Mucosa of descending colon (tissue), 3 donors: ENCODE measurements at regions of chr10 and their contacts with region 1.

Region 1: GRCh38 chr10:88932539-88933256 is 19.9 kb downstream of the ACTA2 start:
- DNase-seq: peak in 2 of 3 donors; percentile 29 to 62
- ATAC-seq: peak; percentile 84
- H3K4me3 ChIP-seq: no peak overlapping the region
- H3K4me1 ChIP-seq: peaks cover 21% of the 10 kb centered on the region
- CTCF ChIP-seq: peak; percentile 56

Region 2: GRCh38 chr10:88835096-88835909 is 97.4 kb before region 1 on chr10:
- intact Hi-C with region 1: loop called (anchors 2 to 5 kb)
- DNase-seq: peak; percentile 86 to 92 (median 91)
- ATAC-seq: peak; percentile 96
- H3K4me3 ChIP-seq: no peak overlapping the region
- H3K4me1 ChIP-seq: no peaks in the 10 kb centered on the region
- CTCF ChIP-seq: peak; percentile 68

Region 3: DNA sequence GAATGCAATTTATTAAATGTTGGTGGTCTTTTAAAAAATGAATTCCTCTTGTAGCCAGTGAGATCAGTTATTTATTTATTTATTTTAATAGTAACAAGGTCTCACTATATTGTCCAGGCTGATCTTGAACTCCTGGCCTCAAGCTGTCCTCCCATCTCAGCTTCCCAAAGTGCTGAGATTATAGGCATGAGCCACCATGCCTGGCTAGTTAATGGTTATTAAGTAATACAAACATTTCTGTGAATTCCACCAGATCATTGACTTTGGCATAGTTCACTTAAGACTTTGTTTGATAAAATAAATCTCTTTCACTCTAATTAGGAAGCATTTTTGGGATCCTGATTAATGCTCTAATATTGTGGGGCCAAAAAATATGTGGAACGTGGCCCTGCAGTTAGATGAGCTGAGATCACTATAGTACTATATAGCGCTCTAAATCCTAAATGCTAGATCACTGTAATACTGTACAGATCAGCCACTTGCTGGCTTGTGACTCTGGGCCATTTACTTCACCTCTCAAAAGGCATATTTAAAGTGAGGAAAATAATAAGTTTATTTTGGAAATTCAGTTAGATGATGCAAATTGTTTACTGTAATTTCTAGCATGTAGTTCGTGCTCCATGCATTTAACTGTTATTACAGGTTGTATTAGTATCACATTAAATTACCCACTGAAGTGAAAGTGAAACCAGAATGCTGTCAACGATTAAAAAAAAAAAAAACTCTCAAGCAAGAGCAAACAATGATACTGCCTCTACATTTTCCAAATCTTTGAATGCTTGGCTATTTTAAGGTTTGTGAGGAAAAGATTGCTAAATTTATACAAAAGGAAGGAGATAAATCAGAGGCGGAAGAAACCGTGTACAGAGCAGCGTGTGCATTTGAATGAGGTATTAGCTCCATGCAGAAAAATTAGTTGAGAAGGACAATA is 42.0 kb after region 1 on chr10:
- intact Hi-C with region 1: loop called in 1 of 2 experiments (anchors 2 kb)
- DNase-seq: no peak
- ATAC-seq: peak; percentile 73
- H3K4me3 ChIP-seq: no peak overlapping the region
- H3K4me1 ChIP-seq: peaks cover 5% of the 10 kb centered on the region
- CTCF ChIP-seq: no peak

Region 4: DNA sequence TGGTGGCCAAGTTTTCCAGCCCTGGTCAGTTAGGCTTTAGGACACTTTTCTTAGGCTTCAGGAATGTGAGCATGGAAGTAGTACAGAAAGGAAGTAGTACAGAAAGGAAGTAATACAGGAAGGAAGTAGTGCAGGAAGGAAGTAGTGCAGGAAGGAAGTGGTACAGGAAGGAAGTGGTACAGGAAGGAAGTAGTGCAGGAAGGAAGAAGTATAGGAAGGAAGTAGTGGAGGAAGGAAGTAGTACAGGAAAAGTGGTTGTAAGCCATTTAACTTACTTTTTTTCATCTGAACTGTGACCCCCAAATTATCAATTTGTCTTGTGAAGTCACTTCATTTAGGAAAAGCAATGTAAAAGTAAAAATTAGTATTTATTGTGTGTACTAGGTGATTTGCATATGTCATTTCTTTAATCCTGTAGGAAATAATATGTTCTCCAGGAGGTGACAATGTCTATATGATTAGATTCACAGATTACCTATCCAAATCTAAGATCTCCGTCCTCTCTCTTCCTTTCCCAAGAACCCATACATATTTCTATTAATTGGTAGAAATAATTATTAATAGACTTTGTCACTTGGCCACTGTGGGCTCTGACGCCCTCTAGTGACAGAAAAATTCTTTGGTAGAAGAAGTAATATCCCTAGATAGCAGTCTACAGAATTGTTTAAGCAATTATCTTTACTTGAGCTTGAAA is 54.0 kb after region 1 on chr10:
- intact Hi-C with region 1: loop called in 1 of 2 experiments (anchors 5 kb)
- DNase-seq: peak in 1 of 3 donors; percentile 60
- ATAC-seq: no peak
- H3K4me3 ChIP-seq: no peak overlapping the region
- H3K4me1 ChIP-seq: peaks cover 18% of the 10 kb centered on the region
- CTCF ChIP-seq: no peak

Region 5: DNA sequence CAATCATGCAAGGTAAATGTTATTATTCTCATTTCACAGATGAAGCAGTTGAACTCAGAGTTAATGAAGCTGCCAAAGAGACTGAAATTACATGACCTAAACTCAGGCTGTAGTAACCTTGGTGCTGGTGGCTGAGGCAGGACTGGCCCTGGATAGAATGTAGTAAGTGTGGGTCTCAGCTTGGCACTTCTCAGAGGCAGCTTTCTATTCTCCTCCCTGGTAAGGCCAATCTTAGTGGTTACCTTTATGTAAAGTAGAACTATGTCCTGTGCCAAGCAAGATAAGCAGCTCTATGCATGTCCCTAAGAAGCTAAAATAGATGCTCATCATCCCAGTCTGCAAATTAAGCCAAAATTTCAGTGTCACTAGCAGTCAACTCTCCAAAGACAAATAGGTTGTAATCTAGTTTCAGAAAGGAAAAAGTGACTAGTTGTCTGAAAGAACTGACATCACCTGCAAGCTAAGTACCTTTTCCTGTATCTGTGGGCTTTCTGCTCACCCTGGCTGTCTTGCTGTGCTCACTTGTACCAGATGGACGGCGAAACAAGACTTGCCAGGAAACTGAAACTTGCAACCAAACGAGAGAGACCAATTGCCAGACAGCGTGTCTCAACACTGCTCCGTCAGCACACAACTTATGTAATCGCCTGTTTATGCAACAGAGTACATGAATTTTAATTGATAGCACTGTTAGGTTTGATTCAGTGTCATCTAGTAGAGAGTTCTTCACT is 230.7 kb after region 1 on chr10:
- intact Hi-C with region 1: no loop called
- DNase-seq: peak in 1 of 3 donors; percentile 45
- ATAC-seq: peak; percentile 72
- H3K4me3 ChIP-seq: no peak overlapping the region
- H3K4me1 ChIP-seq: no peaks in the 10 kb centered on the region
- CTCF ChIP-seq: no peak

Region 6: DNA sequence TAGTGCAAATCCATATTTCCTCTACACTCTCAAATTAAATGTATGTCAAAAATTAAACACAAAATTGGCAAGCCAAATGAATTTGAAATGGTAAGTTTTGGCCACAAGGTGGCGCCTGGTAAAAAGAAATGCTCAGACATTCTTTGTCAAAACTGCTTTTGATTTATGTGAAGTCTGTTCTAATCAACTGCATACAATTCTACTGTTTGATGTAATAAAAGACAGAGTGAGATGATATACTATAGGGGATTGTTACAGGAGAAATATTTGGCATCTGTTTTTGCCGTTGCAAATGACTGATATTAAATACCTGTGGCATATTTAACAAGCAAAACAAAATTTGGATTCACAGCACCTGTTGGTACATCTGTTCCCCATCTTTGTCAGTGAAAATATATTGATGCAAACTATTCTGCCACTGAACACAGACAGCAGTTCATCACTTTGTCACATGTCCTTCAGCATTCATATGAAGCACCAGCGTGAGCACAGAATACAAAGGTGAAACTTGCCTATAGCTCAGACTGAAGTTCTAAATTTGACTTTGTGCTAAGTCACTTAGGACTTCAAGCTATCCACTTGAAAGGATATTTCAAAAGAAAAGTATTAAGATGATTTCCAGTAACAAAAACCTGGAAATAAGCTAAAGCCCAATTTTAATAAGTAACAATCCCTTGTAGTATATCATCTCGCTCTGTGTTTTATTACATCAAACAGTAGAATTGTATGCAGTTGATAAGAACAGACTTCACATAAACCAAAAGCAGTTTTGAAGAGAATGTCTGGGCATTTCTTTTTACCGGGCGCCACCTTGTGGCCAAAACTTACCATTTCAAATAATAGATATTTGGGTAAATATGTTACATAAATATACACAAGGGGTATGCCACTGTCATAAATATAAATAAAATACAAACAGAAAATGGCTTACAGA is 284.6 kb after region 1 on chr10:
- intact Hi-C with region 1: loop called in 1 of 2 experiments (anchors 5 kb)
- DNase-seq: peak in 2 of 3 donors; percentile 44 to 84
- ATAC-seq: peak; percentile 66
- H3K4me3 ChIP-seq: no peak overlapping the region
- H3K4me1 ChIP-seq: peaks cover 8% of the 10 kb centered on the region
- CTCF ChIP-seq: peak; percentile 58